PC-9 (cell line): ENCODE measurements at regions of chr3 and their contacts with region 1.

Region 1: DNA sequence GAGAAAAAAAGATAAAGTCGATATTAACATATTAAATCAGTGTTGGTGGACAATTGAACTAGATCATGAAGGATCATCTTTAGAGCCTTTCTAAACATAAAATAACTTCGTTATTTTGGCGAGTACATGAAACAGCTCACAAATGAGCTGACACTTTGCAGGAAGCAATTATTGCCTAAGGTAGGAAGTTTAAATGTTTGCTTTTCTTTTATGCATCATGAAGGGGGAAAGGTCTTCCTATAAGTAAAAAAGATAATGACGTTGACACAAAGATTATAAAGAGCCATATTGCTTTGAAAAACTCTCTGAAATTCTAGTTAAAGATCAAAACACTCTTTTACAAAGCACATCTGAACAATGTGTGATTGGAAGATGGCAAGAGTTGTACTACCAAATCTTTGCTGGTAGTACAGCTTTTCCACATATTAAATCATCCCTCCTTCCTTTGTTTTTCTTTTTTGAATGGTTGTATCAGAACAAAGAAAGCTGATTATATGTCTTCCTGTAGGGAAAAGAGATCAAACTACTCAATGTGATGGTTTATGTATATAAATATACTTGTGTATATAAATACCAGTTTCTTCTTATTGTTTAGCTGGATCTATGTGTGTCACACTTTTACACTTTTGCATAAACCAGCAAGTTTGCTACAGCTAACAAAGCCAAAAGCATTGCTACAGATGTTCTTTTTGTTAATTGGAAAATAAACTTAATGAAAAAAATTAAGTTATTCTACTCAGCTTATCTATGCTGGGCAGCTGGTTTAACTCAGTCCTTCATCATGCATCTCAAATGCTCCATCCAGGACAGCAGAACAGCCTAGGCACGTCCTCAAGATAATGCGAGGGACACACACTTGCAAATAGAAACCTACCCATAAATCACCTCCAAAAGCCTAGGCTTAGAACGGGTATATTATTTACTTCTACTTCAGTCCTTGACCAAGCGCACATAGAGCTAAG is 850.8 kb upstream of the ROBO1 start:
- DNase-seq: no peak
- H3K4me3 ChIP-seq: no peak overlapping the region
- H3K27ac ChIP-seq: no peak overlapping the region
- H3K4me1 ChIP-seq: no peaks in the 10 kb centered on the region
- H3K27me3 ChIP-seq: no peaks in the 10 kb centered on the region
- CTCF ChIP-seq: no peak

Region 2: DNA sequence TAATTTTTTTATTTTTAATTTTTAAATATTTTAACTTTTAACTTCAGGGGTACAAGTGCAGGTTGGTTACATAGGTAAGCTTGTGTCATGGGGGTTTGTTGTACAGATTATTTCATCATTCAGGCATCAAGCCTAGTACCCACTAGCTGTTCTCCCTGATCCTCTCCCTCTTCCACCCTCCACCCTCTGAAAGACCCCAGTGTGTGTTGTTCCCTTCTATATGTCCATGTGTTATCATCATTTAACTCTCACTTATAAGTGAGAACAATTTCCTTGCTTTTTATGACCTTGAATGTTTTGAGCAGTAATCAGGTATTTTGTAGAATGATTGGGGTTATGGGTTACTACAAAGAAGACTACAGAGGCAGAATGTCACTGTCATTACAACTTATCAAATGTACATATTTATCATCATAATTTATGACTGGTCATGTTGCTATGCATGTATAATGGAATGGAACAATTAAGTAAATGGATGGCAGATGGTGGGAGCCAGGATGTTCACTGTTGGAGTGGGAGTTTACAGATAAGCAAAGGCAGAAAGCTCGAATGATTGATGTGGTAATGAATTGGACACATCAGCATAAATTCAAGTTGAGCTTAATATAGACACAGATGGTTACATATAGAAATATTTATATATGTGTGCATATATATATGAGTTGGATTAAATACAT is 286.9 kb before region 1 on chr3:
- CTCF ChIA-PET with region 1: interaction called, 11 read pairs
- POLR2A ChIA-PET with region 1: no interaction called
- intact Hi-C with region 1: no loop called
- DNase-seq: no peak
- H3K4me3 ChIP-seq: no peak overlapping the region
- H3K27ac ChIP-seq: no peak overlapping the region
- H3K4me1 ChIP-seq: no peaks in the 10 kb centered on the region
- H3K27me3 ChIP-seq: no peaks in the 10 kb centered on the region
- CTCF ChIP-seq: no peak